ENCODE measurements at regions of chr6 and their contacts with region 1.

Region 1: DNA sequence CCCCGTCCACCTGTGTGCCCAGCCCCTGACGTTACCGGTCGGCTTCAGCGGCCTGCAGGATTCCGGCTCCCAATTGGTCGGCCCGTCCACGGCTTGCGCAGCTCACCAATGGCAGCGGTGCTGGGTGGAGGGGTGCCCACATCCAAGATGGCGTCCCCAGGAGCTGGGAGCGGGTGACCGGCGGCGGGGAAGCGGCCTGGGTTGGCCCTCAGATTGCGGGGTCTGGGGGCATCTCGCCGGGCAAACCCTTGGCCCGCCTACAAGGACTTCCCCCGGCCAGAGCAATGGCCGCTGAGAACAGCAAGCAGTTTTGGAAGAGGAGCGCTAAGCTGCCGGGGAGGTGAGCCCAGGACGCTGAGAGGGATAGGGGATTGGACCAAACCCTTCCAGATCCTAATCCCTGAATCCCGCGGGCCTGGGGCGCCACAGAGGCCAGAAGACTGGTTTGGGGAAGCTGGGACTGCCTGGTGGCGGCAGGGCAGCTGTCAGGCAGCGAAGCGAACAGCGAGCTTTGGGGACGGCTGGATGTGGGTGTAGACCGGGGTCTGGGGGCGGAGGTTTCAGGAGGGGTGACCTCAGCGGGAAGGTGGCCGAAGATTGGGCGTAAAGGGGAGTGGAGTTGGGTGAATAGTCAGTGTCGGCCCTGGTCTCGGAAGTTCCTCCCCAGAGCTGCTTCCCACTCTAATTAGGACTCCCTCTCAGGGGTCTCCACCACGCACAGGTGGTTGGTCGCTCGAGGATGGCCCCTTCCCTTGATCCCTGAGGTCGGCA is at the starts of genes TBC1D22B and TMEM217:
- DNase-seq: peak; percentile 94
- H3K4me3 Mint-ChIP-seq: peak within 1 kb of the TSS; percentile 97
- H3K27ac Mint-ChIP-seq: peak within 1 kb of the TSS; percentile 98
- H3K4me1 Mint-ChIP-seq: peaks cover 45% of the 10 kb centered on the region
- H3K27me3 Mint-ChIP-seq: no peaks in the 10 kb centered on the region
- total RNA-seq, gene TBC1D22B: 13.8 and 14.6 TPM in 2 replicates
- total RNA-seq, gene TMEM217: 4.5 and 4.8 TPM in 2 replicates

Region 2: DNA sequence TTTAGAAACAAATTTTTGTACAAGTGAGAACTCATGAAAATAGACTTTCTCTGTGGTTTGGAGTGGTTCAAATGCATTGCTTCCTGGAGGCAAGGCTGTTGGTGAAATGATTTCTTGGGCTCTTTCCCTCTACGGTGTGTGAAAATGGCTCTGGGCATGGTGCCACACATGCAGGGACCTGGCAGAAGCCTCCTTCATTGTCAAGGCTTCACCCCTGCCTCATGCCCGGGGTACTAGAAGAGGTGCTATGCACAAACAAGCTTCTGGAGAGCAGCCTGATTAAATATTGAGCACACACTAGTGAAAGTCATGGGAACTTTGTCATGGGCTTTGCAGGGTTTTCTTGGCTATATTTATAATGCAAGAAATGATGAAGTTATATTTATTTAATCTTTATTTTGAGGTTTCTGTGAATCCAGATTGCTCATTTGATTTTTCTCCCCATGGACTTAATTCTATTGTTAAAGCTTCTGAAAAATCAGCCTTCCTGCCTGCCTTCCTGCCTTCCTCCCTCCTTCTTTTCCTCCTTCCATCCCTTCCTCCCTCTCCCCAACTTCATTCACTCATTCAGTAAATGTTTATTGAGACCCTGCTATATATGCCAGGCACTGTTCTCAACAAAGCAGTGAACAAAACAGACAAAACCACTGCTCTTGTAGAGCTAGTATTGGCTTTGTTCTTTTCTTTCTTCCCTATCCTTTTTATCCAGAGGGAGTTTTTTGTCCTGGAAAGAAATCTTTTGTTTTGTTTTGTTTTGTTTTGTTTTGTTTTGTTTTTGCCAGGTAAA is 351.1 kb before region 1 on chr6:
- intact Hi-C with region 1: no loop called
- DNase-seq: no peak
- H3K4me3 Mint-ChIP-seq: no peak overlapping the region
- H3K27ac Mint-ChIP-seq: no peak overlapping the region
- H3K4me1 Mint-ChIP-seq: peaks cover 34% of the 10 kb centered on the region
- H3K27me3 Mint-ChIP-seq: no peaks in the 10 kb centered on the region

Region 3: DNA sequence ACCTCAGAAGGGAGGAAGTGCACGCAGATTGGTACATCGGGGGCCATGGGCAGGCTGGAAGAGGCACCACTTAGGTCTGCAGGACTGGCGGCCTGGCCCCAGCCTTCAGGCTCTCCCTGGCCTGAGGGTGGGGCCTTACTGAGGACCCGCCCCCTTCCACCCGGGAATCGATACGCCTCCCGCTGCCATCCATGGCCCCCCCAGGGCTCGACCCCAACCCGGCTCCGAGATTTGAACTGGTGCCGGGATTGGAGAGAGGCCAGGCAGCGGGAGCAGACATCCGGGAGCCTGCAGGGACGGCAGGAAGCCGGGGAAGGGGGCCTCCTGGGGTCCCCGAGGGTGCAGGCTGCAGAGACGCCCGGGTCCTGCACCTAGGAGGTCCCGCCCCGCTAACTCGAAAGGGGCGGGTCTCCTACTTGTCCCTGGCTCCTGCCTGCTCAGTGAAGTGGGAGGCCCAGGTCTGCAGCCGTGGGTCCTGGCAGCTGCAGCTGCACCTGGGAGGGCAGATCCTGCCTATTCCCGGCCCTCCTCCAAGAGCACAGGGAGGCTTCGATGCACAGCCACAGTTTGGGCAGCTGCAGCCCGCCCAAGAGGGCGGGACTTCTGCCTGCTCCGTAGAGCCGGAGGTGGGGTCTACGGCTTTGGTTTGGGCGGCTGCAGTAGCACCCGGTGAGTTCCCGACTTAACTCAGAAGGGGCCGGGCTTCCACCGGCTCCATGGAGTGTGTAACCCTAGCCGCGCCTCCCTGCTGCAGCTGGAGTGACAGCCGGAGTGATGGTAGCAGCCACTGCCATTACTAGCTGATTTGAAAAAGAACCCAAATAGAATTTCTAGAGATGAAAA is 35.5 kb before region 1 on chr6:
- intact Hi-C with region 1: loop called (anchors 2 kb)
- DNase-seq: peak; percentile 72
- H3K4me3 Mint-ChIP-seq: peak overlapping the region; percentile 77
- H3K27ac Mint-ChIP-seq: peak overlapping the region; percentile 17
- H3K4me1 Mint-ChIP-seq: peaks cover 18% of the 10 kb centered on the region
- H3K27me3 Mint-ChIP-seq: no peaks in the 10 kb centered on the region

Region 4: DNA sequence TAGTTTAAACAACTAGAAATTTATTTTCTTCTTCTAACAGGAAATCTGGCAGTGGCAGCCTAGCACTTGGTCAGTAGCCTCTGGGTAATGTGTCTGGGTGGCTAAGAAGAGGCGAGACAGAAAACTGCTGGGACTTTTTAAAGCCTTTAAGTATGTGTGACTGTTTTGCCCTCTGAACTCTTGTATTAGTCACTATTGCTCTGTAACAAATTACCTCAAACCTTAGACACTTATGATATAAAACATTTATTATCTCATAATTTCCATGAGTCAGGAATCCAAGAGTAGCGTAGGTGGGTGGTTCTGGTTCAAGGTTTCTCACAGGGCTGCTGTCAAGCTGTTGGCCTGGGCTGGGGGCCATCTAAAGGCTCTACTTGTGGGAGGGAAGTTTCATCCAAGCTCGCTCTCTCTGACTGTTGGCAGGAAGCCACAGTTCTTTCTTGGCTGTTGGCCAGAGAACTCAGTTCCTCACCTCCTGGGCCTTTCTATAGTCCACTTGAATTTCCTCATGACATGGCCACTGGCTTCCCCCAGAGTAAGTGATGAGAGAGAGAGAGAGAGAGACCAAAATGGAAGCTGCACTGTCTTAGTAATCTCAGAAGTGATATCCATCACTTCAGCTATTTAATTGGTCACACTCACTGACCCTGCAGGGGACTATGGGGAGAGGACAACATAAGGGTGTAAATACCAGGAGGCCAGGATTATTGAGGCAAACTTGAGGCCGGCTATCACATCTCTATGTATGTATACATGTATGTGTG is 17.7 kb before region 1 on chr6:
- intact Hi-C with region 1: loop called (anchors 1 kb)
- DNase-seq: peak; percentile 27
- H3K4me3 Mint-ChIP-seq: no peak overlapping the region
- H3K27ac Mint-ChIP-seq: peak overlapping the region; percentile 86
- H3K4me1 Mint-ChIP-seq: peaks cover 41% of the 10 kb centered on the region
- H3K27me3 Mint-ChIP-seq: no peaks in the 10 kb centered on the region

Region 5: DNA sequence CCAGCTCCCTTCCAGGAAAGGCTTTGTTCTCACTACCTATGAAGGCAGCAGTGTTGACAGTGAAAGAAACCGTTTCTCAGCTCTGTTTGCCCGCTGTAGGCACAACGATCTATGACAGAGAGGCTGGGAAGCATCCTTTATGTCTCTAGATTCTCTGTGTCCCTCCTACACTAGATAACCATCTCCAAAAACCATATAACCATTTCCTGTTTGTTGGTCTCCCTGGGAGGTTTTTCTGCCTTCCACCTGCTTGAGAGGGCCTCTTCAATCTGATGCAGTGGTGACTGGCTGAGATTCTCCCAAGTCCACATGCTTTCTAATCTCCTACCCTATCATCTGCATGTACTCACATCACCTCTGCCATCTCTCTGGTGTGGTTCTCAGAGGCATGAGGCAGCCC is 32.1 kb after region 1 on chr6:
- intact Hi-C with region 1: loop called (anchors 1 kb)
- DNase-seq: peak; percentile 64
- H3K4me3 Mint-ChIP-seq: peak overlapping the region; percentile 35
- H3K27ac Mint-ChIP-seq: peak overlapping the region; percentile 78
- H3K4me1 Mint-ChIP-seq: peaks cover 51% of the 10 kb centered on the region
- H3K27me3 Mint-ChIP-seq: no peaks in the 10 kb centered on the region